Activated CD8-positive, alpha-beta T cell treated with anti-CD3 and anti-CD28 coated beads, Interleukin-2, amount 10 ng/mL, durations not matched to agents 7 days and 5 days (primary cell): ENCODE measurements at regions of chr5 and their contacts with region 1.

Region 1: GRCh38 chr5:148957591-148958202 is 105.2 kb downstream of the SH3TC2 start:
- DNase-seq: peak; percentile 62
- ATAC-seq: peak; percentile 61
- H3K4me3 Mint-ChIP-seq: no peak overlapping the region
- H3K27ac Mint-ChIP-seq: no peak overlapping the region
- H3K4me1 Mint-ChIP-seq: no peaks in the 10 kb centered on the region
- H3K27me3 Mint-ChIP-seq: peaks cover 21% of the 10 kb centered on the region

Region 2: DNA sequence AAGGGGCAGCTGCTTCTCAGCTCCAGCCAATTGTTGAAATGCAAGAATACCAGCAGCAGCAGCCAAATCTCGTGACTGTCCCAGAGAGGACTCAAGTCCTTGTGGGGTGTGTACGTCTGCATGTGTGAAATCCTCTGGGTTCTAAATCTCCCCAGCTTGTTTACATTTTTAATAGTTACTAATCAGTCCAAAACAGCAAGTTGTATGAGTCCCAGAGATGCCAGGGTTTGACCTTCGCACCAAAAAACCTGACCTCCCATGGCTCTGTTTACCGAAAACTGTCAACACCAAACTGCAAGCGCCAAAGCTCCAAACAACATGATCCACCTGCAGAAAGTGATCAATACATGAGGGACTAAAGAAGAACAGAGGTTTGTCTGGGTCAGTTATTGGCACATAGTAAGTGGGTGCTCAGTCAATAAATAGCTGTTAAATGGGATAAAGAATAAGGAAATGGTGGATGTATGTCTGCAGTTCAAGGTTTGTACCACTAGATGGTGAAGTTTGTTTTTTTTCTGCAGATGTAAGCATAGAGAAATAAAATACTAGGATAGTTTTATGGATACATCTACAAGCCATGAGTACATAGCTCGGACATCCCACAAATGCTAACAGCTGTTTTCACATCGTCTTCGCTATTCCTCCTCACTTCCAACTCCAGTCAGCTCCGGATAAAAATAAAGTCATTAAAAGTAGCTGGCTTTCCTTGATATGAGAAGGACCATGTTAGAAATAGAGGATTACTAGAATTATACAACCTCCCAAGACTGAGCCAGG is 216.5 kb before region 1 on chr5:
- CTCF ChIA-PET with region 1: interaction called, 86 read pairs
- POLR2A ChIA-PET with region 1: no interaction called
- DNase-seq: no peak
- ATAC-seq: no peak
- H3K4me3 Mint-ChIP-seq: no peak overlapping the region
- H3K27ac Mint-ChIP-seq: no peak overlapping the region
- H3K4me1 Mint-ChIP-seq: peaks cover 2% of the 10 kb centered on the region
- H3K27me3 Mint-ChIP-seq: peaks cover 19% of the 10 kb centered on the region

Region 3: DNA sequence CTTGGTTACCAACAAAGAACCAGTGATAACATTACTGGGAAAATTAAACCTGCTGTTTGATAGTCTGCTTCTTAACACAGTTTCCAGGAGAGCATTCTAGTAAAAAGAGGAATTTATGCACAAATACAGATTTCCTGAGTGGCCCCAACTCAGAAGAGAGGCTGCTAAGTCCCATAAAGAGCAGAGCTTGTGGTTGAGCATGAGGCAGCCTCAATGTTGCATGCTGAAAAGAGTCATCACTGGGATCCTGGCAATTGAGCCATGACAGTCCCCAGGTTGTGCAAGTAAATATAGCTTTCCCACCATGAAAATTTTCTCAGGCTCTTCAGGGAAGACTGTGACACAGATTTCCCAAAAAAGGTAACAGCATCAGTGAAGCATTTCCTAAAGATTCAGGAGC is 178.8 kb before region 1 on chr5:
- CTCF ChIA-PET with region 1: no interaction called
- POLR2A ChIA-PET with region 1: no interaction called
- DNase-seq: no peak
- ATAC-seq: no peak
- H3K4me3 Mint-ChIP-seq: no peak overlapping the region
- H3K27ac Mint-ChIP-seq: no peak overlapping the region
- H3K4me1 Mint-ChIP-seq: no peaks in the 10 kb centered on the region
- H3K27me3 Mint-ChIP-seq: peaks cover 15% of the 10 kb centered on the region

Region 4: DNA sequence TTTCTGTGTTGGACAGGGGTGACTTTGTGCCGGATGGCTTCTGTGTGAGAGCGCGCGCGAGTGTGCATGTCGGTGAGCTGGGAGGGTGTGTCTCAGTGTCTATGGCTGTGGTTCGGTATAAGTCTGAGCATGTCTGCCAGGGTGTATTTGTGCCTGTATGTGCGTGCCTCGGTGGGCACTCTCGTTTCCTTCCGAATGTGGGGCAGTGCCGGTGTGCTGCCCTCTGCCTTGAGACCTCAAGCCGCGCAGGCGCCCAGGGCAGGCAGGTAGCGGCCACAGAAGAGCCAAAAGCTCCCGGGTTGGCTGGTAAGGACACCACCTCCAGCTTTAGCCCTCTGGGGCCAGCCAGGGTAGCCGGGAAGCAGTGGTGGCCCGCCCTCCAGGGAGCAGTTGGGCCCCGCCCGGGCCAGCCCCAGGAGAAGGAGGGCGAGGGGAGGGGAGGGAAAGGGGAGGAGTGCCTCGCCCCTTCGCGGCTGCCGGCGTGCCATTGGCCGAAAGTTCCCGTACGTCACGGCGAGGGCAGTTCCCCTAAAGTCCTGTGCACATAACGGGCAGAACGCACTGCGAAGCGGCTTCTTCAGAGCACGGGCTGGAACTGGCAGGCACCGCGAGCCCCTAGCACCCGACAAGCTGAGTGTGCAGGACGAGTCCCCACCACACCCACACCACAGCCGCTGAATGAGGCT is 131.5 kb before region 1 on chr5 and contains the start of gene ADRB2:
- CTCF ChIA-PET with region 1: interaction called, 32 read pairs
- POLR2A ChIA-PET with region 1: no interaction called
- DNase-seq: peak; percentile 94
- ATAC-seq: peak; percentile 95
- H3K4me3 Mint-ChIP-seq: peak within 1 kb of the TSS; percentile 78
- H3K27ac Mint-ChIP-seq: peak within 1 kb of the TSS; percentile 84
- H3K4me1 Mint-ChIP-seq: peaks cover 49% of the 10 kb centered on the region
- H3K27me3 Mint-ChIP-seq: peaks cover 65% of the 10 kb centered on the region
- total RNA-seq, gene ADRB2: 2.2 to 2.3 TPM

Region 5: GRCh38 chr5:148849461-148849860 is 108.2 kb before region 1 on chr5:
- CTCF ChIA-PET with region 1: interaction called, 13 read pairs
- POLR2A ChIA-PET with region 1: no interaction called
- DNase-seq: peak; percentile 77
- ATAC-seq: peak; percentile 90
- H3K4me3 Mint-ChIP-seq: peak overlapping the region; percentile 61
- H3K27ac Mint-ChIP-seq: peak overlapping the region; percentile 99
- H3K4me1 Mint-ChIP-seq: peaks cover 82% of the 10 kb centered on the region
- H3K27me3 Mint-ChIP-seq: peaks cover 2% of the 10 kb centered on the region

Region 6: DNA sequence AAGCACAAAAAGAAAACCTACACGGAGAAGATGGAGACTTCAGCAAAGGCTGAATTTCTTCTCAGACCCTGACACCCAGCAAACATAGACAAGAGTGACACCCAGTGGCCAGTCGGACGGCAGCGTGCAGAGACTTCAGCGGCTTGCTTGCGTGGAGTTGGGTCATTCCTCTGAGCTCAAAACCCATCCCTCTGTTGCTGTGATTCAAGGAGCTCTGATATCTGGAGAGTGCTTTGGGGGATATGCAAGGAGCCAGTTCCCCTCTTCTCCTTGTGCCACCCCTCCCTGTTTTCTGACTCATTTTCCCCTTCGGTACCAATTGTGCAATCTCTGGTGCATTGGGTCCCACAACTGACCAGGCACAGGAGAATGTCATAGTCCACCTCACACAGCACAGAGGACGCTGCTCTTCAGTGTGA is 77.7 kb after region 1 on chr5:
- CTCF ChIA-PET with region 1: interaction called, 25 read pairs
- POLR2A ChIA-PET with region 1: no interaction called
- DNase-seq: peak; percentile 79
- ATAC-seq: peak; percentile 89
- H3K4me3 Mint-ChIP-seq: no peak overlapping the region
- H3K27ac Mint-ChIP-seq: no peak overlapping the region
- H3K4me1 Mint-ChIP-seq: peaks cover 30% of the 10 kb centered on the region
- H3K27me3 Mint-ChIP-seq: peaks cover 6% of the 10 kb centered on the region